ENCODE measurements at regions of chr6 and their contacts with region 1.

Region 1: GRCh38 chr6:52577022-52577777 is at the start of gene TRAM2:
- DNase-seq: peak; percentile 70
- H3K4me3 Mint-ChIP-seq: peak within 1 kb of the TSS; percentile 85
- H3K27ac Mint-ChIP-seq: peak within 1 kb of the TSS; percentile 77
- H3K4me1 Mint-ChIP-seq: peaks cover 37% of the 10 kb centered on the region
- H3K27me3 Mint-ChIP-seq: peaks cover 2% of the 10 kb centered on the region
- total RNA-seq, gene TRAM2: 4.7 TPM in 2 replicates

Region 2: DNA sequence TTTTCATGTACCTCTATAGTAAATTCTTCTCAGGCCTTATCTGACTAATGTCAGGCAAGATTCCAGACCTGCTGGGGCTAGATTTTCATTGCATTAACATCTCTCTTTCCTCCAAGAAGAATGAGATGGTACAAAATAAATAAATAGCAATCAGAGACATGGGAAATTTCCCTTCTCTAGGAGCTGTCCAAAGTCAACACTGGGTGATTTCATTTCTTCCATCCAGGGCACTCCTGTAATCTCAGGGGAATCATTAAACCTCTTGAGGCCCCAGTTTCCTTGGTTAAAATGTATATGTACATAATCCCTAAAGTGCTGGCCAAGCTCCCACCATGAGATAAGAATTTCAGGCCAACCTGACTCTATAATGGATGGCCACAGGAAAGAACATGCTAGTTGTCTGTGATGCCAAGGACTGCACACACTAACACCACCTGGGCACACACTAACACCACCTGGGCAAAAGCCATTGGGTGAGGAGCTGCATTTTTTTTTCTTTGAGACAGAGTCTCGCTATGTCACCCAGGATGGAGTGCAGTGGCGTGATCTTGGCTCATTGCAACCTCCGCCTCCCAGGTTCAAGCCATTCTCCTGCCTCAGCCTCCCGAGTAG is 333.8 kb before region 1 on chr6:
- intact Hi-C with region 1: no loop called
- DNase-seq: no peak
- H3K4me3 Mint-ChIP-seq: no peak overlapping the region
- H3K27ac Mint-ChIP-seq: no peak overlapping the region
- H3K4me1 Mint-ChIP-seq: no peaks in the 10 kb centered on the region
- H3K27me3 Mint-ChIP-seq: peaks cover 48% of the 10 kb centered on the region

Region 3: DNA sequence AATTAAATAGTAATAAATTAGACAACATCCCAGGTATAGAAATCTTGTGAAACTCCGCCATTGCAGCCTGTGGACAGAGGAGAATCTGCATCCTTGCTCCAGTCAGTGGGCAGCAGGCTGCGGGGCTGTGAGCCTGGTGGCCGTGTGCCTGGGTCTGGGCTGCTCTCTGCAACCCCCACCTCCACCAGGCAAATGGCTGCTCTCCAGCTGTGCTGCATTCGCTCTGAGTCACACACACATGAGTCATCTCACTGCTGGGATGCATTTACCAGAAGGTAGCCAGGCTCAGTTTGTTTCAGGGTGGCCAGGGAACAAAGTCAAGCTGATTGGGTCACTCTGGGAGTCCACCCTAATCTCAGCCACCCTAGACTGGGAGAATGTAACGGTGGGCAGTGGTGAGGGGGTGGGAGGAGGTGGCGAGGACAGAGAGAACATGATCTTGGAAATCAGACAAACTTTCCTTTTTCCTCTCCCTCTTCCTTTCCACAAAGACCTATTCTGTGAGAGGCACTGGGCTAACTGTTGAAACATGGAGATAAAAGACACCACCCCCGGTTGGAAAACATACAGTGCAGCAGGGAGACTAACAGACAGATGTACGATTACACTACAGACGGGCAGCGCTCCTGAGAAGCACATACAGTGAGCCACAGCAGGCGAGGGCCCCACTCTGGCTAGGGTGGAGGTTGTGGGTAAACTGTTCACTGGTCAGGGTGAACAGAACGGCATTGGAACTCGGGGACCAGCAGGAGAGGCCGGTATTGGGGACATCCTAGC is 59.5 kb before region 1 on chr6:
- intact Hi-C with region 1: loop called (anchors 10 kb)
- DNase-seq: no peak
- H3K4me3 Mint-ChIP-seq: no peak overlapping the region
- H3K27ac Mint-ChIP-seq: peak overlapping the region; percentile 58
- H3K4me1 Mint-ChIP-seq: peaks cover 24% of the 10 kb centered on the region
- H3K27me3 Mint-ChIP-seq: no peaks in the 10 kb centered on the region

Region 4: DNA sequence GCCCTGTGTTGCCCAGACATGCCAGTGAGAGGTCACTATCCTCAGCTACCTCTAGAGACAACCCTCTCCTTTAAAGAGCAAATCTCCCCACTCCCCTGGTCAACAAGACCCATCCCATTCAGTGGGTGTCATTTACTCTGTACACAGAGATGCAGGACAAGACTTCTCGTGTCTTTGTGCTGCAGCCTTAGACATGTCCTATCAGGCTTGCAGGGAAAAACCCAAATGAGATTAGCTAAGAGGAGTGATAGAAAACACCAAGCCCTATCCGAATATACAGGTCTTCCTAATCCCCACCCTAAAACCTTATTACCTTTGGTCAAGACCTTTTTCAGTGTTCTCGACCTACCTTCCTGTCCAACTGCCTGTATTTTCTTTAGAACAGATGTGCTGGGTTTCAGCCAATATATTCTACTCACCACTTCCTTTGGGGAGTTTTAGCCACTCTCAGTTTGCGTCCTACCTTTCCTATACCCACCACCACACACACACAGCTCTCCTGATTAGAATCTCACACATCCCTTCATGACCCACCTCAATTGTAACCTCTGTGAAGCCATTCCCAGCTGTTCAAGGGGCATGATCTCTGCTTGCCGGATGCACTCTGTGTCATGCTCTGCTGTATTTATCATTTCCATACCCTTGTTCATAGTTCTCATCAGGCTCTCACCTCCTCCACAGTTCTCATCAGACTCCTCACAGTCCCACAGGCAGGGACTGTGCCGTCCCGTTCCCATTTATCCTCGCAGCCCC is 40.0 kb before region 1 on chr6:
- intact Hi-C with region 1: loop called (anchors 1 kb)
- DNase-seq: peak; percentile 18
- H3K4me3 Mint-ChIP-seq: no peak overlapping the region
- H3K27ac Mint-ChIP-seq: peak overlapping the region; percentile 19
- H3K4me1 Mint-ChIP-seq: peaks cover 51% of the 10 kb centered on the region
- H3K27me3 Mint-ChIP-seq: no peaks in the 10 kb centered on the region

Region 5: DNA sequence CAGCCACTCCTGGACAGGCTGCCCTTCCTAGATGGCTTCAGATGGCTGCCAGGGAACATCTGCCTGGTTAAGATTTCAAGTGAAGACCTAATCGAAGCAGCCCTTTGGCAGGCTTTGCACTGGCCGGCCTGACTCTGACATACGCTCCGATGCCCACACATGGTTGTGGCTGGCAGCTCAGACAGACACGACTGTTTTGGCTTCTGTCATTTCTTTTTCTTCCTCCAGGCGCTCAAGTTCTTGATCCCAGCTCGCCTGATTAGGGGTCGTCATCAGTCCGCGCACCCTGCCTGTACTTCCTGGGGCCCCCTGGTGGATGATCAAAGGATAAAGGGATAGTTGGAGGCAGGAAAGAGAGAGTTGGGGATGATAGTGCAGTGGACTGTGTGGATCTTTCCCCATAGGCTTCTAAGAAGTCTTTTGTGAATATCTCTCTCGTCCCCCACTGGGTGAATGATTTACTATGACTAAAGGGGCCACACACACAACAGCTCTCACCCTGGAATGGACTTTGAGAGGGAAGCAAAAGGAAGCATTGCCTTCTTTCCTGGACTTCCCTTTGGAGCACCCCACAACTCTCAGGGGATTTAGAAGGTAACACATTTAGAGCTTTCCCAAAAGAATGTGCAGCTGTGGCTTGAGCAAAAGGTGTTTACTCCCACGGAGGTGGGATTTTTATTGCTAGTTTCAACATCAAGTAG is 21.1 kb after region 1 on chr6:
- intact Hi-C with region 1: loop called (anchors 2 kb)
- DNase-seq: no peak
- H3K4me3 Mint-ChIP-seq: no peak overlapping the region
- H3K27ac Mint-ChIP-seq: no peak overlapping the region
- H3K4me1 Mint-ChIP-seq: peaks cover 27% of the 10 kb centered on the region
- H3K27me3 Mint-ChIP-seq: peaks cover 2% of the 10 kb centered on the region

Region 6: DNA sequence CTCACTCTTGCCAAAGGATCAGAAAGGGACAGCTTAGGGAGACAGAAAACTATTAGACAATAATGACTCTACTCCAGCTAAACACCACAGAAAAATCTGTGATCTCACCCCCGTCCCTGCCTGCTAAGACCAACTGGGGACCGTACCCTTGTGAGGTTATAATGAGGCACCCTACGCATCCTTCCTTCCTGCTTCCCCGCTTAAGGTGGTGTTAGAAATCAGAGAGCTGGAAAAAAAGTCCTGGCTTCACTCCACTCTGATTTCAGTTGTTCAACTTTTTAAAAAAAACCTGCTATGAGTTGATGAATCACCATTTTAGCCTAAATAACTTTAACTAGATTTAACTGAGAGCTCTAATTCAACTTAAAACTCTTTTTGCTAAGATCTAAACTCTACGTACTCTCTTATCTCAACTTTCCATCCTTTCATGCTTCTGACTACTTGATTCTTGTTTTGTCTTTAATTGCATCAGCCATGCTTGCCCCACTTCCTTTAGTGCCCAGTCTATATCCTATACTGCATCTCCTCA is 57.9 kb after region 1 on chr6:
- intact Hi-C with region 1: loop called (anchors 10 kb)
- DNase-seq: no peak
- H3K4me3 Mint-ChIP-seq: peak overlapping the region; percentile 13
- H3K27ac Mint-ChIP-seq: peak overlapping the region; percentile 53
- H3K4me1 Mint-ChIP-seq: peaks cover 26% of the 10 kb centered on the region
- H3K27me3 Mint-ChIP-seq: no peaks in the 10 kb centered on the region

Region 7: GRCh38 chr6:52664186-52664990 is 87.2 kb after region 1 on chr6:
- intact Hi-C with region 1: loop called (anchors 2 kb)
- DNase-seq: peak; percentile 78
- H3K4me3 Mint-ChIP-seq: no peak overlapping the region
- H3K27ac Mint-ChIP-seq: no peak overlapping the region
- H3K4me1 Mint-ChIP-seq: peaks cover 16% of the 10 kb centered on the region
- H3K27me3 Mint-ChIP-seq: no peaks in the 10 kb centered on the region

Measured in activated T-helper 2 cell treated with anti-CD3 and anti-CD28 coated beads, Interferon-gamma antibody, Interleukin-2, Interleukin-4, amounts not matched to agents 10 μg/mL and 5 μg/mL and 100 μg/mL, durations not matched to agents 14 hours and 24 hours and 36 hours (primary cell).